CD8-positive, alpha-beta memory T cell (primary cell): ENCODE measurements at regions of chr22 and their contacts with region 1.

Region 1: DNA sequence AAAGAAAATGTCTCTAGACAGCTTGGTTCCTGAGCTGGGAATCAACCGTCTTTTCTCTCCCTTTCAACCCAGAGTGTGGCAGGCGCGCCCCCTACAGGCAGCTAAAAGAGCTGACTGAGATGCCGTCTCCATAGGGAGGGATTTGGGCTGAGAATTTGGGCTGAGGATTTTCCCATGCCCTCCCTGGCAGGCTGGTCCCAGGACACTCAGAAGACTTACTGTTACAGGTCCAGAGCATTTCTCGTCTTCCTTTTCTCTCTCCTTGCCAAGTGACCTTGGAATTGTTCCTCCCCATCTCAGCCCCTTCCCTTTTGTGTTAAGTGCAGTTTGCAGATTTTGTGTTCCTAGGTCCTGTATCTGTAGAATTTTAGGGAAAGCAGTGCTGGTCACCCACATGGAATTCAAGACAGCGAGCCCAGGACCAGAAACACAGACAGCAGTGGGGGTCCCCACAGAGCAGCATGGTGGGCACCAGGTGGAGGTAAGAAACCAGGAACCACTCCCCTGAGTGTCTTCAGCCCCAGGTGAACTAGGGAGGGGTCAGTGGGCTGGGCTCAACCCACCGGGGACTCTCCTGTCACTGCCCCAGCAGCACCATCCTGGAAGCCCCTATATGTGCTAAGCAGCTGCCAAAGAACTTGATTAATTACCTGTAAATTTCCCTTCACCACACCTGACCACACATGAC is 9.9 kb upstream of the IGLL5 start:
- DNase-seq: peak; percentile 63 to 84 (median 75)
- H3K4me3 ChIP-seq: no peak overlapping the region
- H3K4me3 Mint-ChIP-seq: no peak overlapping the region
- H3K27ac ChIP-seq: no peak overlapping the region
- H3K27ac Mint-ChIP-seq: peak overlapping the region in 4 of 8 donors; percentile 43 to 69 (median 58)
- H3K4me1 ChIP-seq: no peaks in the 10 kb centered on the region
- H3K4me1 Mint-ChIP-seq: peaks cover 14 to 18% (median 17%) of the 10 kb centered on the region in 3 donors
- H3K27me3 ChIP-seq: no peaks in the 10 kb centered on the region
- H3K27me3 Mint-ChIP-seq: peaks cover 0 to 4% of the 10 kb centered on the region in 2 donors

Region 2: DNA sequence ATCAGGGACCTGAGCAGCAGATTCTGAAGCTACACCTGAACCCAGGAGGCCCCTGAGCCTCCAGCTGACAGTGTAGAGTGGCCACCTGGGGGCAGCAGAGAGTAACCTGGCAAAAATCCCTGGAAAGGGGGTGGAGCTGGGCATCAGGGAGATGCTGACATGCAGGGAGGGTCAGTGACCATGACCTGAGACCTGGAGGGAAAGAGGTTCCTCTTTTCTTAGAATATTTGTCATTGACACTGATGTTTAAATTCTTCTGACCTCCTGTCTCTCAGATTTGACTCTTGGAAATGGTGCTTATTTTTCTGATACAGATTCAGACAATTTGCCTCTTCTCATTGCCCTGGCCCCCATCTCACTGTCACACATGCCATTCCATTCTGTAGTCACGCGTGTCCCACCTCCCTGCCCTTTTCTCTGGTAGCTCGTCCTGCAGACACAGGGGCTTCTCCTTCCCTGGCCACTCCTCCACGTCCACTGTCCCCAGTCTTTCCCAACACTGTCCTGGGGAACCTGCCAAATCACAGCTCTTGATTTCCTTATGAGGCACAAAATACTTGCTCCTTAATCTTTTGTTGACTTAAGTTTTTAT is 107.3 kb before region 1 on chr22:
- CTCF ChIA-PET with region 1: interaction called, 10 read pairs
- POLR2A ChIA-PET with region 1: no interaction called
- DNase-seq: peak; percentile 25 to 62 (median 31)
- H3K4me3 ChIP-seq: no peak overlapping the region
- H3K4me3 Mint-ChIP-seq: peak overlapping the region in 2 of 7 donors; percentile 0 to 15
- H3K27ac ChIP-seq: no peak overlapping the region
- H3K27ac Mint-ChIP-seq: peak overlapping the region; percentile 76 to 91 (median 84)
- H3K4me1 ChIP-seq: peaks cover 4% of the 10 kb centered on the region
- H3K4me1 Mint-ChIP-seq: peaks cover 72 to 97% (median 84%) of the 10 kb centered on the region in 3 donors
- H3K27me3 ChIP-seq: no peaks in the 10 kb centered on the region
- H3K27me3 Mint-ChIP-seq: no peaks in the 10 kb centered on the region

Region 3: GRCh38 chr22:22787786-22788459 is 89.7 kb before region 1 on chr22:
- CTCF ChIA-PET with region 1: interaction called, 59 read pairs
- POLR2A ChIA-PET with region 1: interaction called, 7 read pairs
- DNase-seq: peak; percentile 46 to 84 (median 57)
- H3K4me3 ChIP-seq: no peak overlapping the region
- H3K4me3 Mint-ChIP-seq: peak overlapping the region; percentile 22 to 83 (median 52)
- H3K27ac ChIP-seq: peak overlapping the region; percentile 38
- H3K27ac Mint-ChIP-seq: peak overlapping the region; percentile 78 to 99 (median 90)
- H3K4me1 ChIP-seq: peaks cover 57% of the 10 kb centered on the region
- H3K4me1 Mint-ChIP-seq: peaks cover 79 to 92% (median 80%) of the 10 kb centered on the region in 3 donors
- H3K27me3 ChIP-seq: no peaks in the 10 kb centered on the region
- H3K27me3 Mint-ChIP-seq: no peaks in the 10 kb centered on the region

Region 4: GRCh38 chr22:22848364-22848866 is 29.3 kb before region 1 on chr22:
- CTCF ChIA-PET with region 1: interaction called, 12 read pairs
- POLR2A ChIA-PET with region 1: no interaction called
- DNase-seq: peak; percentile 49 to 83 (median 59)
- H3K4me3 ChIP-seq: no peak overlapping the region
- H3K4me3 Mint-ChIP-seq: peak overlapping the region in 3 of 7 donors; percentile 27 to 74 (median 38)
- H3K27ac ChIP-seq: no peak overlapping the region
- H3K27ac Mint-ChIP-seq: peak overlapping the region in 4 of 8 donors; percentile 47 to 67 (median 66)
- H3K4me1 ChIP-seq: peaks cover 10% of the 10 kb centered on the region
- H3K4me1 Mint-ChIP-seq: peaks cover 56 to 67% (median 65%) of the 10 kb centered on the region in 3 donors
- H3K27me3 ChIP-seq: no peaks in the 10 kb centered on the region
- H3K27me3 Mint-ChIP-seq: no peaks in the 10 kb centered on the region

Region 5: DNA sequence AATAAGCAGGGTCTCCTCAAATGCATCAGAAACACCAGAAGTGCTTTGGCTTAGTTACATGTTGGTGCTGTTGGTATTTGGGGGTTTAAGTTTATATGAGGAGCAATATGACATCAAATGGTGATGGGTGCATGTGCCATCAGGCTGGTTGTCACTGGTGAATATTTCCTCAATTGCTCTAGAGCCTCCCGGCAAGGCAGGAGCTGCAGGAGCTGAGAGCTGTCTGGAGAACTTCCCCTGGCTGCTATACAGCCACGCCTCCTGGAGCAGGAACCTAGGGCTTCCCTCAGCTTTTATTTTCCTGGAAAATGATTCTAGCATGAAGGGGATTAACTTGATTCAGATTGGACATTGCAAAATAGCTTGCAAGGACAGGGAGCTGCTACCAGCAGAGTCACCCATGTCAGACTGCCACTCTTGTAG is 25.7 kb after region 1 on chr22:
- CTCF ChIA-PET with region 1: no interaction called
- POLR2A ChIA-PET with region 1: no interaction called
- DNase-seq: no peak
- H3K4me3 ChIP-seq: no peak overlapping the region
- H3K4me3 Mint-ChIP-seq: no peak overlapping the region
- H3K27ac ChIP-seq: no peak overlapping the region
- H3K27ac Mint-ChIP-seq: no peak overlapping the region
- H3K4me1 ChIP-seq: no peaks in the 10 kb centered on the region
- H3K4me1 Mint-ChIP-seq: no peaks in the 10 kb centered on the region
- H3K27me3 ChIP-seq: no peaks in the 10 kb centered on the region
- H3K27me3 Mint-ChIP-seq: peaks cover 1 to 12% of the 10 kb centered on the region in 2 donors

Region 6: GRCh38 chr22:22928666-22929380 is 51.2 kb after region 1 on chr22:
- CTCF ChIA-PET with region 1: no interaction called
- POLR2A ChIA-PET with region 1: no interaction called
- DNase-seq: peak in 4 of 5 donors; percentile 5 to 74 (median 31)
- H3K4me3 ChIP-seq: no peak overlapping the region
- H3K4me3 Mint-ChIP-seq: peak overlapping the region in 3 of 7 donors; percentile 8 to 28 (median 17)
- H3K27ac ChIP-seq: no peak overlapping the region
- H3K27ac Mint-ChIP-seq: peak overlapping the region in 3 of 8 donors; percentile 23 to 74 (median 47)
- H3K4me1 ChIP-seq: peaks cover 11% of the 10 kb centered on the region
- H3K4me1 Mint-ChIP-seq: peaks cover 7 to 37% (median 17%) of the 10 kb centered on the region in 3 donors
- H3K27me3 ChIP-seq: no peaks in the 10 kb centered on the region
- H3K27me3 Mint-ChIP-seq: peaks cover 0 to 3% of the 10 kb centered on the region in 2 donors